ENCODE measurements at regions of chr1 and their contacts with region 1.

Region 1: GRCh38 chr1:155084722-155085503 is 6.3 kb downstream of the EFNA3 start:
- DNase-seq: peak; percentile 92 to 99
- H3K4me3 ChIP-seq: peak overlapping the region; percentile 26
- CTCF ChIP-seq: peak in 1 of 3 donors; percentile 95
- POLR2A ChIP-seq: no peak

Region 2: GRCh38 chr1:155044812-155045690 is 39.9 kb before region 1 on chr1:
- intact Hi-C with region 1: loop called (anchors 5 kb)
- DNase-seq: peak; percentile 83 to 92
- H3K4me3 ChIP-seq: no peak overlapping the region
- CTCF ChIP-seq: no peak
- POLR2A ChIP-seq: no peak

Region 3: GRCh38 chr1:155063550-155064110 is 21.3 kb before region 1 on chr1 and contains the start of gene EFNA4:
- intact Hi-C with region 1: loop called (anchors 2 kb)
- DNase-seq: peak; percentile 89 to 96
- H3K4me3 ChIP-seq: peak within 1 kb of the TSS; percentile 46
- CTCF ChIP-seq: no peak
- POLR2A ChIP-seq: no peak
- total RNA-seq, gene EFNA4: 29.5 to 66.6 (median 52.9) TPM

Region 4: DNA sequence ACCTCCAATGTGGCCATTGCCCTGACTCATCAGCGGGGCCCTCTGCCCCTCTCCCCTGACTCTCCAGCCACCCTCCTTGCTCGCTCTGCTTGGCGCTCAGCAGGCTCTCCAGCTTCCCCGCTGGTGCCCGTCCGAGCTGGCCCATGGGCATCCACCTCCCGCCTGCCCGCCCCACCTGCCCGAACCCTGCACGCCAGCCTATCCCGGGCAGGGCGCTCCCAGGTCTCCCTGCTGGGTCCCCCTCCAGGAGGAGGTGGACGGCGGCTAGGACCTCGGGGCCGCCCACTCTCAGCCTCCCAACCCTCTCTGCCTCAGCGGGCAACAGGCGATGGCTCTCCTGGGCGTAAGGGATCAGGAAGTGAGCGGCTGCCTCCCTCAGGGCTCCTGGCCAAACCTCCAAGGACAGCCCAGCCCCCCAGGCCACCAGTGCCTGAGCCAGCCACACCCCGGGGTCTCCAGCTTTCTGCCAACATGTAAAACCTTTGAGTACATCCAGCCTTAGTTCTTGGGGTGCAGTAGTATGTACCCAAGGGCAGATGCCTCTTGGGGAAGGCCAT is 203.2 kb after region 1 on chr1:
- intact Hi-C with region 1: no loop called
- DNase-seq: no peak
- H3K4me3 ChIP-seq: no peak overlapping the region
- CTCF ChIP-seq: no peak
- POLR2A ChIP-seq: no peak

Measured in lower leg skin (tissue), 4 donors.